HCT116 (cell line): ENCODE measurements at regions of chr1 and their contacts with region 1.

Region 1: DNA sequence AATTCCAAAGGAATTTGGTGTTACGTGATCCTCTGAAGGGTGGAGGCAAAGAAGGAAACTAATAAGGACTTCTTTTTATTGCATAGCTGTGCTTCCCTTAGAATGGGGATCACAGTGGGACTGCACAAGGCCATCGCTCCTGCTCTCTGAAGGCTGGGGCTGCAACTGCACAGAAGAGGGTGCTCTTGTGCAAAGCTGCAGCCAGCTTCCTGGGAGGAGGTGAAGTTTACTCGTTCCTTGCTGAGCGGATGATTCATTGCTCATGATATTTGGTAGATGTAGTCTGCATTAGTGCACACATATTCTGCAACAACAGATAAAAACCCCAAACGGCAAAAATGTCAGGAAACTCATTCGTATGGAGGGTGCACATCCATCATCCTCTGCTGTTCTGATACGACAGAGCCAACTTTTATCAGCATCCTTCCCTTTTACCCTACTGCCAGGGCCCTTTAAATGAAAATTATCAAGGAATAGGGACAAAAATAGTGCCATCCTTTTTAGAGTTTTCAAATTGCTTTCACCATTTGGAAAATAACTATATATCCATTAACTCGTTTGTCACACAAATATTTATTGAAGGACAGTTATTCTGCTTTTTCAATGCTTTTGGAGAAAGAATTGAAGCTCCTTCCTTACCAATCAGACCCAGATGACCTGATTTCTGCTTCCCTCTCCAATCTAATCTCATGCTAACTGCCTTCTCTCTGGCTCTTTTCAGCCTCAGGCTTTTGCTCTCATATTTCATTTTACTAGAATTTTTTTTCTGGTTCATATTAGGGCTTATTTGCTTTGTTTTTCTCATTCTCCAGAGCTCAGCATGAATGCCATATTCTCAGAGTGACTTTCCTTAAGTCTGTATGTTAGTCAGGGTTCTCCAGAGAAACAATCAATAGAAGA is 263.6 kb downstream of the DUSP10 start:
- DNase-seq: peak; percentile 47
- ATAC-seq: peak; percentile 100
- H3K4me3 ChIP-seq: no peak overlapping the region
- H3K27ac ChIP-seq: no peak overlapping the region
- H3K4me1 ChIP-seq: peaks cover 0 to 6% of the 10 kb centered on the region in 2 experiments; a peak in 2 of 4 replicates
- H3K27me3 ChIP-seq: no peaks in the 10 kb centered on the region
- CTCF ChIP-seq: peak; percentile 62 to 76 (median 76); a peak in 5 of 6 replicates
- POLR2A ChIP-seq: no peak
- RAD21 ChIP-seq: peak; percentile 94

Region 2: GRCh38 chr1:221263831-221264767 is 214.2 kb before region 1 on chr1:
- CTCF ChIA-PET with region 1: interaction called, 11 read pairs
- POLR2A ChIA-PET with region 1: no interaction called
- RAD21 ChIA-PET with region 1: no interaction called
- intact Hi-C with region 1: no loop called
- DNase-seq: peak; percentile 75
- ATAC-seq: peak; percentile 92
- H3K4me3 ChIP-seq: no peak overlapping the region
- H3K27ac ChIP-seq: no peak overlapping the region
- H3K4me1 ChIP-seq: no peaks in the 10 kb centered on the region
- H3K27me3 ChIP-seq: no peaks in the 10 kb centered on the region
- CTCF ChIP-seq: peak; percentile 54 to 67 (median 55); a peak in 5 of 6 replicates
- POLR2A ChIP-seq: no peak
- RAD21 ChIP-seq: peak; percentile 66

Region 3: DNA sequence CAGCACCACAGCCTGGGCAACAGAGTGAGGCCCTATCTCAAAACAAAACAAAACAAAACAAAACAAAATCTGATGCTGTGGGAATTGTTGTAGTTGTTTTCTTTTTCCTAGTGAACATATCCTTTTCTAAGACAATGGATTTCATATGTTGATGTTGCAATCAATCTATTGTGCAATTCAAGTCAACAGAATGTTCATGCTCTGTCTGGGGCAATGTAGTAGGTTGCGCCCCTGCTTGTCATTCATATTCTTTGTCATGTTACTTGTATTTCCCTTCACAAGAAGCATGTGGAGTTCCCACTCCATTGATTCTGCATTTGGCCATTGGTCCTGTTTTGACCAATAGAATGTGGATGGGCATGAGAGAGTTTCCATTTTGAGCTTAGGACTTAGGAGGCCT is 39.7 kb after region 1 on chr1:
- CTCF ChIA-PET with region 1: no interaction called
- POLR2A ChIA-PET with region 1: no interaction called
- RAD21 ChIA-PET with region 1: no interaction called
- intact Hi-C with region 1: no loop called
- DNase-seq: no peak
- ATAC-seq: no peak
- H3K4me3 ChIP-seq: no peak overlapping the region
- H3K27ac ChIP-seq: no peak overlapping the region
- H3K4me1 ChIP-seq: no peaks in the 10 kb centered on the region
- H3K27me3 ChIP-seq: no peaks in the 10 kb centered on the region
- CTCF ChIP-seq: no peak
- POLR2A ChIP-seq: no peak
- RAD21 ChIP-seq: no peak

Region 4: GRCh38 chr1:221858818-221859611 is 380.7 kb after region 1 on chr1:
- CTCF ChIA-PET with region 1: no interaction called
- POLR2A ChIA-PET with region 1: no interaction called
- RAD21 ChIA-PET with region 1: no interaction called
- intact Hi-C with region 1: loop called (anchors 5 kb)
- DNase-seq: no peak
- ATAC-seq: no peak
- H3K4me3 ChIP-seq: no peak overlapping the region
- H3K27ac ChIP-seq: no peak overlapping the region
- H3K4me1 ChIP-seq: no peaks in the 10 kb centered on the region
- H3K27me3 ChIP-seq: no peaks in the 10 kb centered on the region
- CTCF ChIP-seq: no peak
- POLR2A ChIP-seq: no peak
- RAD21 ChIP-seq: no peak

Region 5: GRCh38 chr1:222009105-222009730 is 530.9 kb after region 1 on chr1:
- CTCF ChIA-PET with region 1: interaction called, 5 read pairs
- POLR2A ChIA-PET with region 1: no interaction called
- RAD21 ChIA-PET with region 1: interaction called in 1 of 2 experiments, 4 read pairs
- intact Hi-C with region 1: loop called (anchors 1 kb)
- DNase-seq: no peak
- ATAC-seq: peak; percentile 85
- H3K4me3 ChIP-seq: no peak overlapping the region
- H3K27ac ChIP-seq: no peak overlapping the region
- H3K4me1 ChIP-seq: no peaks in the 10 kb centered on the region
- H3K27me3 ChIP-seq: no peaks in the 10 kb centered on the region
- CTCF ChIP-seq: peak; percentile 46 to 49 (median 47); a peak in 5 of 6 replicates
- POLR2A ChIP-seq: no peak
- RAD21 ChIP-seq: peak; percentile 66

Region 6: GRCh38 chr1:222167111-222167510 is 688.8 kb after region 1 on chr1:
- CTCF ChIA-PET with region 1: interaction called, 6 read pairs
- POLR2A ChIA-PET with region 1: no interaction called
- RAD21 ChIA-PET with region 1: no interaction called
- intact Hi-C with region 1: loop called (anchors 1 kb)
- DNase-seq: peak; percentile 35
- ATAC-seq: peak; percentile 80
- H3K4me3 ChIP-seq: no peak overlapping the region
- H3K27ac ChIP-seq: no peak overlapping the region
- H3K4me1 ChIP-seq: 0 out of 4 replicates have a peak, but pooled peaks cover 0 to 3% of the 10 kb centered on the region in 2 experiments
- H3K27me3 ChIP-seq: no peaks in the 10 kb centered on the region
- CTCF ChIP-seq: peak; percentile 47 to 85 (median 79); a peak in 5 of 6 replicates
- POLR2A ChIP-seq: no peak
- RAD21 ChIP-seq: peak; percentile 63